H1 (cell line): ENCODE measurements at regions of chr1 and their contacts with region 1.

Region 1: GRCh38 chr1:105027838-105028471 is 1278.3 kb downstream of the AMY1C start:
- DNase-seq: peak in 1 of 2 experiments; percentile 45
- H3K4me3 ChIP-seq: no peak overlapping the region
- H3K27ac ChIP-seq: no peak overlapping the region
- H3K4me1 ChIP-seq: no peaks in the 10 kb centered on the region
- H3K27me3 ChIP-seq: no peaks in the 10 kb centered on the region
- CTCF ChIP-seq: peak in 2 of 3 experiments; percentile 28 to 46; a peak in 2 of 4 replicates
- EP300 ChIP-seq: no peak
- POLR2A ChIP-seq: no peak
- RAD21 ChIP-seq: peak; percentile 75 to 81

Region 2: DNA sequence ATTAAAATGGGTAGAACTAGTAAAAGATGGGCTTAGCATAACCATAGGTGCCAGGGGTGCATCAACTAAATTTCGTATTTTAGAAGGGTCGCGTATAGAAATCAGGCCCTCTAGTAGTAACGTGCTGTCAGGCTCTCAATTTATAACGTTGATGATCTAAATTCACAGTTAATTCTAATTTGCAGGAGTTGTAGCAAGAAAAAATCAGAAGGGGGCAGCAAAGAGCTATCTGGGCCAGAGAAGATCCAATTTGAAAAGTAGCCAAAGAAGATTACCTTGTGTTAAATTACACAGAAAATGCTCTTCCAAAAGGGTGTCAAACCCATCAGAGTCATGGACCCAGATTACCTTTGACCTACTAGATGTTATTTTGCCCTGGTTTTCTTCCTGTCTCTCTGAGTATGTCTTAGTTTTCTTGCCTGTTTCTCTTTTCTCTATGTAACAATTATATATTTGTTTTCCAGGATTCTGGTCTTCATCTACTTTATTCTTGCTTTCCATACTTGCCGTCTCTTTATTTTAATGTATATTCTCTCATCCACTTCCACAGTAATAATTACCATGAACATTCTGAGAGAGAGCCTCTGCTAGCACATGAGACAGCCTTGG is 247.4 kb before region 1 on chr1:
- CTCF ChIA-PET with region 1: interaction called, 14 read pairs
- POLR2A ChIA-PET with region 1: no interaction called
- DNase-seq: no peak
- H3K4me3 ChIP-seq: no peak overlapping the region
- H3K27ac ChIP-seq: no peak overlapping the region
- H3K4me1 ChIP-seq: no peaks in the 10 kb centered on the region
- H3K27me3 ChIP-seq: no peaks in the 10 kb centered on the region
- CTCF ChIP-seq: peak in 2 of 3 experiments; percentile 60 to 64; a peak in 2 of 4 replicates
- EP300 ChIP-seq: no peak
- POLR2A ChIP-seq: no peak
- RAD21 ChIP-seq: peak; percentile 87 to 91

Region 3: GRCh38 chr1:105017587-105017986 is 10.4 kb before region 1 on chr1:
- CTCF ChIA-PET with region 1: interaction called, 12 read pairs
- POLR2A ChIA-PET with region 1: no interaction called
- DNase-seq: no peak
- H3K4me3 ChIP-seq: no peak overlapping the region
- H3K27ac ChIP-seq: no peak overlapping the region
- H3K4me1 ChIP-seq: no peaks in the 10 kb centered on the region
- H3K27me3 ChIP-seq: no peaks in the 10 kb centered on the region
- CTCF ChIP-seq: peak in 2 of 3 experiments; percentile 13 to 26; a peak in 2 of 4 replicates
- EP300 ChIP-seq: no peak
- POLR2A ChIP-seq: no peak
- RAD21 ChIP-seq: peak in 1 of 2 experiments; percentile 20; a peak in 1 of 4 replicates